Vagina (tissue), 2 donors: ENCODE measurements at regions of chr11 and their contacts with region 1.

Region 1: GRCh38 chr11:65477149-65477965 is 21.5 kb upstream of the MALAT1 start:
- DNase-seq: peak in 1 of 2 donors; percentile 96
- H3K4me3 ChIP-seq: peak overlapping the region; percentile 84 to 91
- H3K27ac ChIP-seq: peak overlapping the region; percentile 100
- H3K4me1 ChIP-seq: peaks cover 67% of the 10 kb centered on the region
- H3K27me3 ChIP-seq: no peaks in the 10 kb centered on the region
- CTCF ChIP-seq: no peak
- POLR2A ChIP-seq: peak in 1 of 2 donors; percentile 86

Region 2: GRCh38 chr11:65489706-65490110 is 12.4 kb after region 1 on chr11:
- intact Hi-C with region 1: loop called (anchors 1 kb)
- DNase-seq: peak in 1 of 2 donors; percentile 91
- H3K4me3 ChIP-seq: peak overlapping the region in 1 of 2 donors; percentile 12
- H3K27ac ChIP-seq: peak overlapping the region; percentile 100
- H3K4me1 ChIP-seq: peaks cover 96% of the 10 kb centered on the region
- H3K27me3 ChIP-seq: no peaks in the 10 kb centered on the region
- CTCF ChIP-seq: no peak
- POLR2A ChIP-seq: no peak

Region 3: GRCh38 chr11:65551572-65552398 is 74.4 kb after region 1 on chr11:
- intact Hi-C with region 1: no loop called
- DNase-seq: no peak
- H3K4me3 ChIP-seq: no peak overlapping the region
- H3K27ac ChIP-seq: no peak overlapping the region
- H3K4me1 ChIP-seq: peaks cover 43% of the 10 kb centered on the region
- H3K27me3 ChIP-seq: no peaks in the 10 kb centered on the region
- CTCF ChIP-seq: no peak
- POLR2A ChIP-seq: no peak